ENCODE measurements at regions of chr1 and their contacts with region 1.

Region 1: DNA sequence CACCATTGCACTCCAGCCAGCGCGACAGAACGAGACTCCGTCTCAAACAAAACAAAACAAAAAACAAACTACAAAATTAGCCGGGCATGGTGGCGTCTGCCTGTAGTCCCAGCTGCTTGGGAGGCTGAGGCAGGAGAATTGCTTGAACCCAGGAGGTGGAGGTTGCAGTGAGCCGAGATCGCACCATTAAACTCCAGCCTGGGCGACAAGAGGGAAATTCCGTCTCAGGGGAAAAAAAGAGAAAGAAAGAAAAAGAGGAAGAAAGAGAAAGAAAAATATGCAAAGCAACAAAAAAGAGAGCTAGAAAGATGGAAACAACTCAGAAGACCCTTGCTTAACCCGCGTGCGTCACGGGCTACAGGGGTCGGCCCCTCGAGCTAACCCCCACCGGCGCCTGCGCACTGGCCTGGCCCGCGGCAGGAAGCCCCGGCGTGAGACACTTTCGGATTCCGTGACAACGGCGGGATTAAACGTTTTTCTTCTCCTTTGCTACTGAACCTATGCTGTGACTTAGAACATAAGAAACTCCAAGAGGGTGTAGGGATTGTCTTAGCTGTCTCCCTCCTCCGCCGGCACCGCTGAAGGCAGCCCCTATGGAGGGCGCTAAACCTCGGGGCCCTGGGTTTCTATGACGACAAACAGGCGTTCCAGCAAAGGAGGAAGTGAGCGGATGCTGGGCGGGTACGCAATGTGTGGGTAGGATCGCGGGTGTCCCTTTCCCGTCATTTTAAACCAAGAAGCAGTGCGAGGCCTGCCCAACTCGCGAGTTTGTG is at the start of gene AXDND1:
- DNase-seq: peak; percentile 80 to 96 (median 86)
- ATAC-seq: peak; percentile 90
- H3K4me3 ChIP-seq: peak within 1 kb of the TSS; percentile 79
- H3K4me3 Mint-ChIP-seq: peak within 1 kb of the TSS; percentile 96
- H3K27ac ChIP-seq: peak within 1 kb of the TSS; percentile 94 to 99
- H3K27ac Mint-ChIP-seq: peak within 1 kb of the TSS; percentile 99
- H3K4me1 ChIP-seq: peaks cover 14% of the 10 kb centered on the region
- H3K4me1 Mint-ChIP-seq: peaks cover 14% of the 10 kb centered on the region
- H3K27me3 ChIP-seq: no peaks in the 10 kb centered on the region
- H3K27me3 Mint-ChIP-seq: no peaks in the 10 kb centered on the region
- CTCF ChIP-seq: no peak
- total RNA-seq, gene AXDND1: 1.1 TPM

Region 2: GRCh38 chr1:178532392-178532791 is 833.1 kb before region 1 on chr1:
- CTCF ChIA-PET with region 1: no interaction called
- POLR2A ChIA-PET with region 1: no interaction called
- intact Hi-C with region 1: loop called in 1 of 2 experiments (anchors 2 kb)
- DNase-seq: peak; percentile 49 to 86 (median 68)
- ATAC-seq: peak; percentile 75
- H3K4me3 ChIP-seq: no peak overlapping the region
- H3K4me3 Mint-ChIP-seq: no peak overlapping the region
- H3K27ac ChIP-seq: no peak overlapping the region
- H3K27ac Mint-ChIP-seq: no peak overlapping the region
- H3K4me1 ChIP-seq: peaks cover 7% of the 10 kb centered on the region
- H3K4me1 Mint-ChIP-seq: peaks cover 5% of the 10 kb centered on the region
- H3K27me3 ChIP-seq: no peaks in the 10 kb centered on the region
- H3K27me3 Mint-ChIP-seq: peaks cover 5% of the 10 kb centered on the region
- CTCF ChIP-seq: peak; percentile 95

Region 3: DNA sequence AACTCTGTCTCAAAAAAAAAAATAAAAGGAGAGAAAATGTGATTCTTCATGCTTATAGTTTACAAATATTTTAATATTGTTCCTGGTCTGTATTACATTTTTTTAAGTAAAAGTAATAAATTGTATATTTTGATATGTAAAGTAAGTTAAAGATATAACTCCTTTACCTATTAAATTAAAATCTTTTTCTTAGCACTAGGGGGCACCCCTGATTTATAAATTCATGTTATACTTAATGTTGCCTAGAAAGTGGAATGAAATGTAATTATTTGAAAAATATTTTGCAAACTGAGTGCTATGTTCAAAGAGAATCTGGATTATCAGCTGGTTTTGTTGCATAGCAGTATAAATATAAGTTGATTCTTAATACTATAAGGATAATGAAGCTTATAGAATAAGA is 591.2 kb before region 1 on chr1:
- CTCF ChIA-PET with region 1: no interaction called
- POLR2A ChIA-PET with region 1: no interaction called
- intact Hi-C with region 1: loop called in 1 of 2 experiments (anchors 5 kb)
- DNase-seq: peak in 3 of 14 experiments; percentile 22 to 42 (median 26)
- ATAC-seq: no peak
- H3K4me3 ChIP-seq: no peak overlapping the region
- H3K4me3 Mint-ChIP-seq: no peak overlapping the region
- H3K27ac ChIP-seq: no peak overlapping the region
- H3K27ac Mint-ChIP-seq: no peak overlapping the region
- H3K4me1 ChIP-seq: no peaks in the 10 kb centered on the region
- H3K4me1 Mint-ChIP-seq: no peaks in the 10 kb centered on the region
- H3K27me3 ChIP-seq: no peaks in the 10 kb centered on the region
- H3K27me3 Mint-ChIP-seq: no peaks in the 10 kb centered on the region
- CTCF ChIP-seq: peak; percentile 54

Region 4: DNA sequence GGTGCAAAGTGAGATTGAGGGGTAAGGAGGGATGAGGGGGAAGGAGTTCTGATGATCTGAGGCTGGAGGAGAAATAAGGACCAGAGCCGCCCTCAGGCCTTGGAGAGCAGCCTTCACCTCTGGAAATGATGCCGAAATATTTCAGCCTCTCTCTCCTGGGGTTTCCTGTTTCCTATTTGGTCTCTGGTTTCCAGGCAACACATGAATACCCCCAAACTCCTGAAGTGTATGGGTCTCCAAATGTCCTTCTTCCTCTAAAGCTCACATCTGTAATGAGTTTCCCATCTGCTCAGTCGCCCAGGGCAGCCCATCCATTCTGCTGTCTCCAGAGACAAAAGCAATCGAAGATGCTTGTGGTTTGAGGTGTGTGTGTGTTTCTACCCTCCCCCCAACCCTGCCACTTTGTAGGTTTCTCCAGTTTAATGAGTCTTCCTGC is 391.8 kb before region 1 on chr1:
- CTCF ChIA-PET with region 1: no interaction called
- POLR2A ChIA-PET with region 1: no interaction called
- intact Hi-C with region 1: no loop called
- DNase-seq: peak in 1 of 14 experiments; percentile 2
- ATAC-seq: no peak
- H3K4me3 ChIP-seq: no peak overlapping the region
- H3K4me3 Mint-ChIP-seq: no peak overlapping the region
- H3K27ac ChIP-seq: no peak overlapping the region
- H3K27ac Mint-ChIP-seq: no peak overlapping the region
- H3K4me1 ChIP-seq: peaks cover 8% of the 10 kb centered on the region
- H3K4me1 Mint-ChIP-seq: no peaks in the 10 kb centered on the region
- H3K27me3 ChIP-seq: no peaks in the 10 kb centered on the region
- H3K27me3 Mint-ChIP-seq: peaks cover 6% of the 10 kb centered on the region
- CTCF ChIP-seq: no peak

Region 5: DNA sequence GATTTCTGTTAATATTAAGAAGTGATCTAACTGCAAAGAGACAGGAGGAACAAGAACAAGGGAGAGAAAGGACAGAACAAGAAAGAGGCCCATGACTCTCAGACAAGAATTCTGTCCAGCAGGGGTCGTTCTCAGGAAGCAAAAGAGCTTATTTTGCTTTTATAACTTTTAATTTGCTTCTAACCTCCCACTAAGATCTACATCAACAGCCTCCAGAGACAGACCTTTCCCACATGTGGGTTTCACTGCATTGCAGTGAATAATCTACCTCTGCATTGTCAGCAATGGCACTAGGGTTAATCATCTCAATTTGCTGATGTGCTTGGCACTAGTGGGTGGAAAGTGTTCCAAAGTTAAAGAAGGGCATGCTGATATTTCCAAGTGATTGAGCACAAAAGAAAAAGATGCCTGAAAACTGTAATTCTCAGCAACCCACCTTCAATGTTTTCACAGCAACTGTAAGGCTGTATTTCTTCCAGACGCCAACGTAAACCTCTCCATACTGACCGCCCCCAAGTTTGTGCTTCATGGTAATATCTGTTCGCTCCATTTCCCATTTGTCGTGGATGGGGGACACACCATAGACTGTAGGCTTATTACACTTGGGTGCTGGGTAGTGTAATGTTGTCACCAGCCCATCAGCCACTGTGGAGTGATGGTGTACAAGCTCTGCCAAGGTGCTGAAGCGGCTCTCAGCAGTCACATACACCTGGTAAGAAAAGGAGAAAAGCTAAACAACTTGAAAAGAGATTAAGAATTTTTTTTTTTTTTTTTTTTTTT is 244.2 kb before region 1 on chr1:
- CTCF ChIA-PET with region 1: interaction called, 8 read pairs
- POLR2A ChIA-PET with region 1: interaction called, 3 read pairs
- intact Hi-C with region 1: loop called (anchors 1 kb)
- DNase-seq: peak in 11 of 14 experiments; percentile 18 to 69 (median 32)
- ATAC-seq: peak; percentile 64
- H3K4me3 ChIP-seq: no peak overlapping the region
- H3K4me3 Mint-ChIP-seq: no peak overlapping the region
- H3K27ac ChIP-seq: no peak overlapping the region
- H3K27ac Mint-ChIP-seq: no peak overlapping the region
- H3K4me1 ChIP-seq: no peaks in the 10 kb centered on the region
- H3K4me1 Mint-ChIP-seq: peaks cover 5% of the 10 kb centered on the region
- H3K27me3 ChIP-seq: no peaks in the 10 kb centered on the region
- H3K27me3 Mint-ChIP-seq: no peaks in the 10 kb centered on the region
- CTCF ChIP-seq: peak; percentile 61

Region 6: DNA sequence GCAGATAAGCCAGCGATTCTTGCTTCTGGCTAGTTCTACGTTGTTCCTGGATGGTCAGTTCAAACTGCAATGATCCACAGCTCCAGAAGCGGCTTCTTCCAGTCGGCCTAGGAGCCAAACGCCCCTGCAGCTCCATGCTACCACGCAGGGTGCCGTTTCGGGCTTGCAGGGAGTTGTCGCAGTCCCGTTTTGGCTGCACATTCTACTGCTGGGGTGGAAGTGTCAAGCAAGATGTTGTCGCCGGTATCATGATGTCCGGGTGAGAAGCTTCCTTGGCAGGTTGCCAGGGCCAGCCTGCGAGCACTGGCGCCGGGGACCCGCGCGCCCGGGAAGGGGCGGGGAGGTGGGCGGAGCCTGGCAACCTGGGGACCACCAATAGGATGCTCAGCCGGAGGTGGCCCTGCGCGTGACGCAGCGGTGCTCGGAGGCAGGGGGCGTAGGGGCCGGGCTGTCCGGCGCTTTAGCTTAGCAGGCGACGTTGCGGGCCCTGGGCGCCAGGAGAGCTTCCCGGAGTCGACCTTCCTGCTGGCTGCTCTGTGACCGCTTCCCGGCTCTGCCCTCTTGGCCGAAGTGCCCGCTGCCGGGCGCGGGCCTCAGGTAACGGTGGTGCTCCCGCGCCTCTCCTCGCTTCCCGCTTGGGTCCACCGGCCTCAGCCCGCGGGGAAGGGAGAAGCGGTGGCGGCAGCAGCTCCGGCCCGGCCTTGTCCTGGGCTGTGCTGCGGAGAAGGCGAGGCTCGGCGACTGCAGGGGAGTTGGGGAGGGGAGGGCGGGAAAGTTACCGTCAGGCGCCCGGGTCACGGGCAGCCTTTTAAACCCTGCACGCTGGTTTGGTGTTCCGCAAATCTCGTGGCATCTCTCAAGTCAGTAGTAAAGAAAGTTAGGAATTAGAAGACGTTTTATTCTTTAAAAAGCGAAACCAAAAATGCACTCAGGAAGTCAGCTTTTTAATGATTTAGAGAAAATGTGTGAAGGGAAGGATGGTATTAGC is 71.9 kb before region 1 on chr1 and contains the start of gene SOAT1:
- CTCF ChIA-PET with region 1: interaction called, 12 read pairs
- POLR2A ChIA-PET with region 1: interaction called, 56 read pairs
- intact Hi-C with region 1: loop called (anchors 2 kb)
- DNase-seq: peak; percentile 81 to 99 (median 93)
- ATAC-seq: peak; percentile 91
- H3K4me3 ChIP-seq: peak within 1 kb of the TSS; percentile 80
- H3K4me3 Mint-ChIP-seq: peak within 1 kb of the TSS; percentile 93
- H3K27ac ChIP-seq: peak within 1 kb of the TSS; percentile 77 to 81
- H3K27ac Mint-ChIP-seq: peak within 1 kb of the TSS; percentile 85
- H3K4me1 ChIP-seq: peaks cover 38% of the 10 kb centered on the region
- H3K4me1 Mint-ChIP-seq: peaks cover 44% of the 10 kb centered on the region
- H3K27me3 ChIP-seq: no peaks in the 10 kb centered on the region
- H3K27me3 Mint-ChIP-seq: no peaks in the 10 kb centered on the region
- CTCF ChIP-seq: no peak
- total RNA-seq, gene SOAT1: 35.7 to 37.2 TPM

Region 7: GRCh38 chr1:179385510-179385909 is 20.0 kb after region 1 on chr1:
- CTCF ChIA-PET with region 1: no interaction called
- POLR2A ChIA-PET with region 1: no interaction called
- intact Hi-C with region 1: no loop called
- DNase-seq: no peak
- ATAC-seq: no peak
- H3K4me3 ChIP-seq: no peak overlapping the region
- H3K4me3 Mint-ChIP-seq: no peak overlapping the region
- H3K27ac ChIP-seq: no peak overlapping the region
- H3K27ac Mint-ChIP-seq: no peak overlapping the region
- H3K4me1 ChIP-seq: no peaks in the 10 kb centered on the region
- H3K4me1 Mint-ChIP-seq: no peaks in the 10 kb centered on the region
- H3K27me3 ChIP-seq: no peaks in the 10 kb centered on the region
- H3K27me3 Mint-ChIP-seq: no peaks in the 10 kb centered on the region
- CTCF ChIP-seq: no peak

Region 8: GRCh38 chr1:180154325-180155181 is 789.0 kb after region 1 on chr1 and contains the start of gene QSOX1:
- CTCF ChIA-PET with region 1: no interaction called
- POLR2A ChIA-PET with region 1: no interaction called
- intact Hi-C with region 1: loop called in 1 of 2 experiments (anchors 10 kb)
- DNase-seq: peak; percentile 80 to 97 (median 86)
- ATAC-seq: peak; percentile 97
- H3K4me3 ChIP-seq: peak within 1 kb of the TSS; percentile 90
- H3K4me3 Mint-ChIP-seq: peak within 1 kb of the TSS; percentile 95
- H3K27ac ChIP-seq: peak within 1 kb of the TSS; percentile 19 to 42
- H3K27ac Mint-ChIP-seq: peak within 1 kb of the TSS; percentile 82
- H3K4me1 ChIP-seq: peaks cover 27% of the 10 kb centered on the region
- H3K4me1 Mint-ChIP-seq: peaks cover 33% of the 10 kb centered on the region
- H3K27me3 ChIP-seq: no peaks in the 10 kb centered on the region
- H3K27me3 Mint-ChIP-seq: no peaks in the 10 kb centered on the region
- CTCF ChIP-seq: no peak
- total RNA-seq, gene QSOX1: 13.7 to 14.3 TPM